RWPE1 (cell line): ENCODE measurements at regions of chr1 and their contacts with region 1.

Region 1: DNA sequence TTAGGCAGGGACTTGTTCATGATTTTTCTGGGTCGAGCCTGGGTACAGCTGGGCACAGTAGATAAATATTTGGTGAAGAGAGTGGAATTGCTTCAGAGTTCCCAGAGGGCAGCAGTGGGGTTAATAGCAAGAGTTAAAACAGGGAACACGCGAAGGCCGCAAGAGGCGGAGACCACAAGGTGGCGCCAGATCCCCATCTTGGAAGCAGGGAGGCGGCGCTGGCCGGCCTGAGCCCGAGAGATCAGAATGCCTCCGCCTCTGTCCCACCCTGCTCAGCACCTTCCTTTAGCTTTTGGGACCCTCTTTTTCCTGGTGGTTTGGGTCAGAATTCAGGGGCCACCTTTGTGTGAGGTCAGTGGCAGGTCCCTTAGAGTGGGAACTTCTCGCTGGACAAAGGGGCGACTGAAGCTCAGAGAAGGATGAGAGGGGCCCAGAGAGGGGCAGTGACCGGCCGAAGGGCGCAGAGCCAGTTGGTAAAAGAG is 6.5 kb upstream of the PADI2 start:
- DNase-seq: peak; percentile 81
- H3K27ac ChIP-seq: peak overlapping the region; percentile 98
- CTCF ChIP-seq: peak; percentile 93

Region 2: GRCh38 chr1:17236779-17237560 is 111.2 kb after region 1 on chr1:
- CTCF ChIA-PET with region 1: interaction called, 58 read pairs
- POLR2A ChIA-PET with region 1: interaction called, 10 read pairs
- DNase-seq: peak; percentile 75
- H3K27ac ChIP-seq: peak overlapping the region; percentile 78
- CTCF ChIP-seq: peak; percentile 80

Region 3: DNA sequence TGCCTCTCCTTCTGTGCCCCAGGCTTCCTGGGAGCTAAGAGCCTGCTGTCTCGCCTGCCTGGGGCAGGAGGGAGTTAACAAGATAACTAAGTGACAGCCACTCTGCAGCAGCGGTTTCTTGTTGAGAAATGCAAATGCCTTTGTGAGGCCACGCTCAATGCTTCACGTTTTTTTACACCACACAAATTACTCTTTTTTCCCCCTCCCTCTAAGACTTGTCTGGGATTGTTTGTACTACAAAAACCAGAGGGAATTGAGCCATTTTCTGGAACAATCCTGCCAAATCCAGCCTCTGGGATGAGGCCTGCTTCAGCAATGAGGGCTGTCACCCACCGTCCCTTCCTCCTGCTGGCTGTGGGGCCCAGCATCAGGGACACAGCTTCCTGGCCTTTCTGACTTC is 748.9 kb after region 1 on chr1:
- CTCF ChIA-PET with region 1: no interaction called
- POLR2A ChIA-PET with region 1: no interaction called
- DNase-seq: peak; percentile 19
- H3K27ac ChIP-seq: peak overlapping the region; percentile 79
- CTCF ChIP-seq: no peak